ENCODE measurements at regions of chr14 and their contacts with region 1.

Region 1: GRCh38 chr14:64503478-64504309 is at the start of gene ZBTB25:
- DNase-seq: peak; percentile 93 to 95
- H3K4me3 ChIP-seq: peak within 1 kb of the TSS; percentile 97
- H3K4me3 Mint-ChIP-seq: peak within 1 kb of the TSS; percentile 78
- H3K27ac Mint-ChIP-seq: peak within 1 kb of the TSS; percentile 81
- H3K4me1 ChIP-seq: peaks cover 29% of the 10 kb centered on the region
- H3K4me1 Mint-ChIP-seq: peaks cover 16% of the 10 kb centered on the region
- H3K27me3 ChIP-seq: no peaks in the 10 kb centered on the region
- H3K27me3 Mint-ChIP-seq: no peaks in the 10 kb centered on the region
- CTCF ChIP-seq: no peak
- total RNA-seq, gene ZBTB25: 8.8 and 10.0 TPM in 2 replicates

Region 2: DNA sequence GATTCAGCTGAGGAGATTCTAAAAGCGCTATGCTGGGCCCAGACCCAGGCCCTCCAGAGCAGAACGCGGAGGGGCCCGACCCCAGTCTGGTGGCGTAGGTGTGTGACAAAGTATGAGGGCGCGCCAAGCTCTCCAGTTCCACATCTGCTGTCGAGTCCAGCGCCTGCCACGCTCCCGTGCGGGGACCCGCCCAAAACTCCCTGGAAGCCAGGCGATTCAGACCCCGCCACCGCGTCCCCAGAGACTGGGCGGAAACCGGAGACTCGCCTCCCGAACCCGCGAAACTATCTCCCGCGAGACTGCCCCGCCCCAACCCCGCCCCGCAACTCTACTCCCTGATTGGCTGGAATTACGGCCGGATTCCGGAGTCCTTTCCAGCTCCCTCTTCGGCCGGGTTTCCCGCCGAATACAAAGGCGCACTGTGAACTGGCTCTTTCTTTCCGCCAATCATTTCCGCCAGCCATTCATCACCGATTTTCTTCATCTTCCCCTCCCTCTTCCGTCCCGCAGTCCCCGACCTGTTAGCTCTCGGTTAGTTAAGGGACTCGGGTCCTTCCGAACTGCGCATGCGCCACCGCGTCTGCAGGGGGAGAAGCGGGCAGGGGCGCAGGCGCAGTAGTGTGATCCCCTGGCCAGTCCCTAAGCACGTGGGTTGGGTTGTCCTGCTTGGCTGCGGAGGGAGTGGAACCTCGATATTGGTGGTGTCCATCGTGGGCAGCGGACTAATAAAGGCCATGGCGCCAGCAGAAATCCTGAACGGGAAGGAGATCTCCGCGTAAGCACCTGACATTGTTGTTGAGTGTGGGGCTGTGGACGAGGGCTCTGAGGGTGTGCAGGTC is 115.8 kb before region 1 on chr14 and contains the start of gene MTHFD1:
- CTCF ChIA-PET with region 1: no interaction called
- POLR2A ChIA-PET with region 1: interaction called, 14 read pairs
- intact Hi-C with region 1: loop called (anchors 5 kb)
- DNase-seq: peak; percentile 98 to 99
- H3K4me3 ChIP-seq: peak within 1 kb of the TSS; percentile 53
- H3K4me3 Mint-ChIP-seq: peak within 1 kb of the TSS; percentile 93
- H3K27ac Mint-ChIP-seq: peak within 1 kb of the TSS; percentile 87
- H3K4me1 ChIP-seq: peaks cover 3% of the 10 kb centered on the region; the same call in 1 of the 2 replicates
- H3K4me1 Mint-ChIP-seq: peaks cover 13% of the 10 kb centered on the region
- H3K27me3 ChIP-seq: no peaks in the 10 kb centered on the region
- H3K27me3 Mint-ChIP-seq: no peaks in the 10 kb centered on the region
- CTCF ChIP-seq: no peak
- total RNA-seq, gene MTHFD1: 180 and 203 TPM in 2 replicates

Region 3: DNA sequence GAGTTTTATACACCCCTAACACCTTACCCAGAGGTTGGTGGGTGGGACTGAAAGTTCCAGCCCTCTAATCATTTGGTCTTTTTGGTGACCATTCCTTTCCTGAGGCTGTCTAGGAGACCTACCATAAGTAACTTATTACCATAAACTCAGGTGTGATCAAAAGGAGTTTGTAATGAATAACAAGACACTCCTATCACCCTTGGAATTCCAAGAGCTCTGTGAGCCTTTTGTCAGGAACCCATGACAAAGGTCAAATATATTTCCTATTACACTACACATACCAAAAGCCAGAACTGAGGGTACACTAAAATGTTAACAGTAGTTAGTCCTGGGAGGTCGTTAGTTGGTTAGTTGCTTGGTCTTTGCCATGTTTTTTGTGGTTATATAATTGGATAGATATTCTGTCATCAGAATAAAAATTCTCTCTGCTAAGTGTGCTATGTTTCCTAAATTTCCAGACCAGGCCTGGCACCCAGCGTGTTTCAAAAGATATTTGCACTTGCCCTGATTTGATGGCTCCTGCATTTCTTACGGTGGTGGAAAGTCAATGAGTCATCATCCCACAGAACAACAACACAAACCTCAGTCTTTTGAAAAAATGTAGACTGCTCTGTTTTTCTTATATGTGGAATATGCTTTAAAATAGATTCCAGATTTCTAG is 65.4 kb before region 1 on chr14:
- CTCF ChIA-PET with region 1: no interaction called
- POLR2A ChIA-PET with region 1: interaction called, 10 read pairs
- intact Hi-C with region 1: no loop called
- DNase-seq: peak; percentile 74 to 77
- H3K4me3 ChIP-seq: no peak overlapping the region
- H3K4me3 Mint-ChIP-seq: peak overlapping the region; percentile 58
- H3K27ac Mint-ChIP-seq: peak overlapping the region; percentile 84
- H3K4me1 ChIP-seq: peaks cover 53% of the 10 kb centered on the region
- H3K4me1 Mint-ChIP-seq: peaks cover 15% of the 10 kb centered on the region
- H3K27me3 ChIP-seq: no peaks in the 10 kb centered on the region
- H3K27me3 Mint-ChIP-seq: no peaks in the 10 kb centered on the region
- CTCF ChIP-seq: no peak

Region 4: DNA sequence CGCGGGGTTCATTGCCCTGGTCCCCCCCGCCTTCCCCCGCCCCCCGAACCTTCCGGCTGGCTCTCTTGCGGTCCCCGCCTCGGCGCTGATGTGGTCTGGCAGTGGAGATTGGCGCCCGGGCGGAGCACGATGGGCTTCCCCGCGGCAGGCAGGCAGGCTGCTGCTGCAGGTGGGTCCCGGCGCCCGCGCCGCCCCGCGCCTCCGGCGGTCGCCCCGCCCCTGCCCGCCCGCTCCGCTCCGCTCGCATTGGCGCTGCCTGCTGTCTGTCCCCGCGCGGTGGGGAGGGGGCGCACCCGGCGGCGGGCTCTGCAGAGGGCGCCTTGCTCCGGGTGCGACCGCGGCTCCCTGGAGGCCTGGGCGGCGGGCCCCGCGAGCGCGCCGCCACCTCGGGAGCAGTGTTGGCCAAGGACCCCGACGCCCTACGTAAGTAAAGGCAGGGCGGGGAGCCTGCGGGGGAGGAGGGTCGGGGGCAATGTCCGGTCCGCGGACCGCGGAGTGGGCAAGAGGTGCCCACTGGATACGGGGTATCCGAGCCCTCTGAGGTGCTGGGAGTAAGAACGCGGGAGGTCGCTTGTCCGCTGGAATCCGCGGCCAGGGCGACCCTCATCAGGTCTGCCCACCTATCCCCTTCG is 38.4 kb before region 1 on chr14 and contains the start of gene AKAP5:
- CTCF ChIA-PET with region 1: interaction called, 3 read pairs
- POLR2A ChIA-PET with region 1: interaction called, 4 read pairs
- intact Hi-C with region 1: loop called (anchors 1 kb)
- DNase-seq: peak; percentile 83 to 94
- H3K4me3 ChIP-seq: peak within 1 kb of the TSS; percentile 97
- H3K4me3 Mint-ChIP-seq: peak within 1 kb of the TSS; percentile 96
- H3K27ac Mint-ChIP-seq: peak within 1 kb of the TSS; percentile 93
- H3K4me1 ChIP-seq: peaks cover 30% of the 10 kb centered on the region
- H3K4me1 Mint-ChIP-seq: peaks cover 10% of the 10 kb centered on the region
- H3K27me3 ChIP-seq: no peaks in the 10 kb centered on the region
- H3K27me3 Mint-ChIP-seq: no peaks in the 10 kb centered on the region
- CTCF ChIP-seq: no peak
- total RNA-seq, gene AKAP5: 15.0 and 15.9 TPM in 2 replicates

Region 5: DNA sequence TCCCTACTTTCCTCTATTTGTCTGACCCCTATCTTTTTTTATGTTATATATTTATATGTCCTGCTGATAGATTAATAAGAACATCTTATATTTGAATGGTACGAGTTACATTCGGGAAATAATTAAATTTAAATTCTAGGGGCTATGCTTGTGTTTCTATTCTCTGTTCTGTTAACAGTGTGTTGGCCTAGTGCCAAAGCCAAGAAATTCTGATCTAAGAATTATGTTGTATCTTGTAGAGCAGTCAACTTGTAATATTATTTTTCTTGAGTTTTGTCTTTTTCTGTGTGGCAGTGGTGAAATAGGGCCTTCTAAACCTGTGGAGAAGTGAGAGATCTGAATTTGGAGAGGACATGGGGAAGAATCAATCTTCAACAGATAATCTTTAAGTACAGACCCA is 27.9 kb after region 1 on chr14:
- CTCF ChIA-PET with region 1: no interaction called
- POLR2A ChIA-PET with region 1: no interaction called
- intact Hi-C with region 1: no loop called
- DNase-seq: no peak
- H3K4me3 ChIP-seq: no peak overlapping the region
- H3K4me3 Mint-ChIP-seq: no peak overlapping the region
- H3K27ac Mint-ChIP-seq: no peak overlapping the region
- H3K4me1 ChIP-seq: peaks cover 9% of the 10 kb centered on the region; the same call in 1 of the 2 replicates
- H3K4me1 Mint-ChIP-seq: peaks cover 12% of the 10 kb centered on the region
- H3K27me3 ChIP-seq: no peaks in the 10 kb centered on the region
- H3K27me3 Mint-ChIP-seq: no peaks in the 10 kb centered on the region
- CTCF ChIP-seq: no peak

Region 6: GRCh38 chr14:64758691-64759584 is 255.2 kb after region 1 on chr14:
- CTCF ChIA-PET with region 1: no interaction called
- POLR2A ChIA-PET with region 1: interaction called, 4 read pairs
- intact Hi-C with region 1: loop called (anchors 10 kb)
- DNase-seq: peak; percentile 91 to 94
- H3K4me3 ChIP-seq: no peak overlapping the region
- H3K4me3 Mint-ChIP-seq: peak overlapping the region; percentile 51
- H3K27ac Mint-ChIP-seq: peak overlapping the region; percentile 92
- H3K4me1 ChIP-seq: peaks cover 83% of the 10 kb centered on the region
- H3K4me1 Mint-ChIP-seq: peaks cover 75% of the 10 kb centered on the region
- H3K27me3 ChIP-seq: no peaks in the 10 kb centered on the region
- H3K27me3 Mint-ChIP-seq: no peaks in the 10 kb centered on the region
- CTCF ChIP-seq: no peak

Measured in Caco-2 (cell line).